ENCODE measurements at regions of chr18 and their contacts with region 1.

Region 1: DNA sequence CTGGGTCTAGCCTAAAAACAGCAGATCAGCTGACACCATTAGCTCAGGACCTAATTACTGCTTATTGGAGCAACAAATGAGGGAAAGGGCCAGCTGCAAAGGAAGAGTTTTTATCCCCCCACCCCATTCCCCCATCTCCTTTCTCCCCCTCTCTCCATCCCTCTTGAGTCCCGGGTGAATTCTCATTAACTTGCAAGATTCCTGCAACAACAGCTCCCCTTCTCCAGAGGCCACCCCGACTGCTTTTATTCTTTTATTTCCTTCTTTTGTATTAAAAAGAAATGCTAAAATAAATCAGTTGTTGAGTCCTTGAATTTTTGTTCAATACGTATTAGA is 473 bp upstream of the NOL4 start:
- DNase-seq: no peak
- ATAC-seq: no peak

Region 2: DNA sequence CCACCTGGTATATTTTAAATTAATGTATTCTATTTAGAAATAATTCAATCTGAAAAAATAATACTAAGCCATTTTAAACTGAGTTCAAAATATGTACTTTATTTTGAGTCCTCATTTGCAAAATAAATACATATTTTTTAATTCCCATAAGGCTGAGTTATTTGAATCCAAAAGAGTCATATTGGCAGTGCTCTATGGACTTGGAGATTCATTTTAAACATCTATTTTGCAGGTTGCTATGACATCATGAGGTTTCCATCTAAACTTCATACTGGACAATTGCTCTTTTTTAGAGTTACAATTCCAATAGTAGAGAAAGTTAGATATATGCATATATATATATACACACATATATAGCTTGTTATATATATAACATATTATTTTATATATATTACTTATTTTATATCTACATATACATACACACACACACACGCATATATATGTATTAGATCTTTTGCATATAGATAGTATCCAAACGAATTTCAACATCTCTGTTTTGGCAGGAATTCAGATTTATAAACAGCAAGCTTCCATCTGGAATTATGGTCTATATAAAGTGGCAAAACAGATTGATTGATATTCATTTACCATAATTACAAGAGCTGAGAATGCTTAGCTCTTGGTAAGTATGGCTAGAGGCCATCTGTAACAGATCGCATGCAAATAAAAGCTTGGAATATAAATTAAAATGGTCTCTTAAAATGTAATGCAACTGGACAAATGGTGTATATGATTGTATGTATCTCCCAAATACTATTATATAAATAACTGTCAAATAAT is 35.3 kb before region 1 on chr18:
- intact Hi-C with region 1: no loop called
- DNase-seq: no peak
- ATAC-seq: no peak

Region 3: DNA sequence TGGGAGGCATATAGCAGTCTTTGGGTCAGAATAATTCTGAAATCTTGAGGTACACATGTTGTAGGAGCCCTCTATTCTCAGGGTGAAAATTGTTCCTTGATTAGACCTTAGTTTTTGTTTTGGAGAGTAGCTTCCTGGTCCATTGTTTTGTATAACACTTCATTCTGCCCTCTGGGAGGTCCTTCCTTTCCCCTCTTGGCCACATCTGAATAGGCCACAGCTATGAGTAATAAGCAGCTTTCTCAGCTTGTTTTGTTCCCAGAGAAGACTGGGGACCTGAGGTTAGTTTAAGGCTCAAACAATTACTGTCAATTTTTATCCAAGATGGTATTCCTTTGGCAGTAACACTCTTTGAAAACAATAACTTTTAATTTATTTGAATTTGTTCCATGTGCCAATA is 72.1 kb after region 1 on chr18:
- intact Hi-C with region 1: loop called in 1 of 2 experiments (anchors 10 kb)
- DNase-seq: no peak
- ATAC-seq: no peak

Region 4: GRCh38 chr18:35071819-35072247 is 846.6 kb after region 1 on chr18:
- intact Hi-C with region 1: no loop called
- DNase-seq: no peak
- ATAC-seq: peak; percentile 24 to 80